CD8-positive, alpha-beta T cell (primary cell): ENCODE measurements at regions of chr18 and their contacts with region 1.

Region 1: DNA sequence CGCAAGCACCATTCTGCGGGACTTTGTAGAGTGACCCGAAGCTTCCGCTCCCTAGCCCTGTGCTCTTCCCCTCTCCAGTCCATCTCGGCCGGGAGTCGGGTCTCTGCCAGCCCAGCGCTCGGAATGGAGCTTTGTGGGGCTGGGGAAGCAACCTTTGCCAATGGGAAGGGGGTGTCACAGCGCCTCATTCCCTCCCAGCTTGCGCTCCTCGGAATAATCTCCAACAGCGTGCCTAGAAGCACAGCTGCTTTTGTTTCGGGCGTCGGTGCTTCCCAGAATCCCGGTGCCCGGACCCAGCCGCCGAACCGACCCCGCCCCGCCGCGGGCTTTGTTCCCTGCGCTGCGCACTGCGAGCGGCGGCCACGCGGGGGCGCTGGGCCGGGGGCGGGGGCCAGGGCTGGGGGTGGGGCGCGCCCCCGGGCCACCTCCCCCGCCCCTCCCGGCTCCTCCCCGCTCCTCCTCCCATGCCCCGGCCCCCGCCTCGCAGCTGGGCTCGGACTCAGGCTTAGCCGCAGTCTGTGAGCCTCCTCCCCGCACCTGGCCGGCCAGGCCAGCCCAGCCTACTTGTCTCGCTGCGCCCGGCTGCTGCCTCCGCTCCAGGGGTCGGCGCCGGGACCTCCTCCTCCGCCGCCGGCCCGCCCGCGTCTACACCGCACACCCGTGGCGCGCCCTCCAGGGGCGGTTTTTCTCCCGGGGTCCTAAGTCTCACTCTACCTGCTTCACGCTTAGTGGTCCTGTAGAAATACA is 77.7 kb upstream of the SMAD2 start:
- DNase-seq: peak in 8 of 9 experiments; percentile 33 to 70 (median 47)
- ATAC-seq: peak; percentile 88
- H3K4me3 ChIP-seq: peak overlapping the region; percentile 29 to 58
- H3K4me3 Mint-ChIP-seq: peak overlapping the region; percentile 80
- H3K27ac ChIP-seq: no peak overlapping the region
- H3K27ac Mint-ChIP-seq: no peak overlapping the region
- H3K4me1 ChIP-seq: peaks cover 10% of the 10 kb centered on the region
- H3K4me1 Mint-ChIP-seq: peaks cover 7% of the 10 kb centered on the region
- H3K27me3 ChIP-seq: peaks cover 3 to 4% of the 10 kb centered on the region in 2 experiments
- H3K27me3 Mint-ChIP-seq: peaks cover 28% of the 10 kb centered on the region
- CTCF ChIP-seq: peak; percentile 76

Region 2: DNA sequence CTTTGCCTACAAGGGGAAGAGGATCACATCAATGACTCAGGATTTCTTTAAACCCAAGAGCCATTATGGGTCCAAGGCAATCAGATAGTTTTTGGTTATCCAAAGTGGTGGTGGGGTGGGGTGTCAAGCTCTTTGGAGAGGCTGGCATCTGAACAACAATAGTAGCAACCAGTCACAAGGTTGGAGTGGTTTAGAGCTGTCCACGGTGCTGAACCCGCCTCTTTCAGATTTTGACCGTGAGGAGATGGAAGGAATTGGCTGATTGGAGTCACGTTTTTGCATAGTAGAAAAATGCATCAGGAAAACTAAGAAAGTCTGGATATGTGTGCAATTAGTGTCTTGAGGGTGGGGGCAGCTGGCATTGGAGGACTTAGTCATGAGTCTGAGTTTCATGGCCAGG is 1511.0 kb before region 1 on chr18:
- CTCF ChIA-PET with region 1: no interaction called
- POLR2A ChIA-PET with region 1: no interaction called
- intact Hi-C with region 1: no loop called
- DNase-seq: peak in 4 of 9 experiments; percentile 7 to 30 (median 11)
- ATAC-seq: no peak
- H3K4me3 ChIP-seq: no peak overlapping the region
- H3K4me3 Mint-ChIP-seq: no peak overlapping the region
- H3K27ac ChIP-seq: no peak overlapping the region
- H3K27ac Mint-ChIP-seq: no peak overlapping the region
- H3K4me1 ChIP-seq: no peaks in the 10 kb centered on the region
- H3K4me1 Mint-ChIP-seq: no peaks in the 10 kb centered on the region
- H3K27me3 ChIP-seq: no peaks in the 10 kb centered on the region
- H3K27me3 Mint-ChIP-seq: peaks cover 10% of the 10 kb centered on the region
- CTCF ChIP-seq: no peak

Region 3: GRCh38 chr18:47997338-47997780 is 10.8 kb before region 1 on chr18:
- CTCF ChIA-PET with region 1: interaction called, 14 read pairs
- POLR2A ChIA-PET with region 1: no interaction called
- intact Hi-C with region 1: no loop called
- DNase-seq: peak in 4 of 9 experiments; percentile 22 to 49 (median 34)
- ATAC-seq: no peak
- H3K4me3 ChIP-seq: no peak overlapping the region
- H3K4me3 Mint-ChIP-seq: no peak overlapping the region
- H3K27ac ChIP-seq: no peak overlapping the region
- H3K27ac Mint-ChIP-seq: no peak overlapping the region
- H3K4me1 ChIP-seq: no peaks in the 10 kb centered on the region
- H3K4me1 Mint-ChIP-seq: no peaks in the 10 kb centered on the region
- H3K27me3 ChIP-seq: no peaks in the 10 kb centered on the region
- H3K27me3 Mint-ChIP-seq: no peaks in the 10 kb centered on the region
- CTCF ChIP-seq: peak; percentile 29